ENCODE measurements at regions of chr7 and their contacts with region 1.

Region 1: GRCh38 chr7:35801392-35802101 is 690 bp downstream of the SEPTIN7 start:
- DNase-seq: peak; percentile 79
- H3K4me3 Mint-ChIP-seq: peak overlapping the region; percentile 95
- H3K27ac Mint-ChIP-seq: peak overlapping the region; percentile 90
- H3K4me1 Mint-ChIP-seq: peaks cover 44% of the 10 kb centered on the region
- H3K27me3 Mint-ChIP-seq: no peaks in the 10 kb centered on the region

Region 2: DNA sequence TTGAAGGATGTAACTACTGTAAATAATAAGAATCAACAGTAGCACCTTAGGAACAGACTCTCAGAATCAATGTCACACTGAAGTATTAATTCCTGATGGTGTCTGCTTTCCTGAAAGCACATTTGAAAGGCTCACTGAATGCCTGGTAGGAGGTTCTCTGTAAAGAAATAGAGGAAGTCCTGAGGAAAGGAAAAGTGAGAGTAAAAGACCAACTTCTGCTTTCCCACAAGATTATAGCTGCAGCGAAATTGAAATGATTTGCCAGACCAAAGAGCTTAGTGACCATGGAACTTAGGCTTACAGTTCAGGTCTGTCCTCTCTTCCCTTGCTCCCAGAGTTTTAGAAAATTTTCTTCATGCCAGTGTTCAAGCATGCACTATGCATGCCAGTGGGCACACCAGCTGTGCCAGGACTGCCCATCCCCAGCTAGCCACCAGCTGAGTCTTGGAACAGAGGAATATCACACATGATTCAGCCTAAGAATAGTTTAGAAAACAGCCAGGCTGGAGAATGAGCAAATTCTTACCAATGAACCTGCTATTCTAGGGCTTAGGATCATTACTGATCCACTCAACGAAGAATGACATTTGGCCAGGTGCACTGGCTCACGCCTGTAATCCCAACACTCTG is 229.8 kb before region 1 on chr7:
- CTCF ChIA-PET with region 1: no interaction called
- POLR2A ChIA-PET with region 1: no interaction called
- DNase-seq: no peak
- H3K4me3 Mint-ChIP-seq: no peak overlapping the region
- H3K27ac Mint-ChIP-seq: no peak overlapping the region
- H3K4me1 Mint-ChIP-seq: no peaks in the 10 kb centered on the region
- H3K27me3 Mint-ChIP-seq: peaks cover 8% of the 10 kb centered on the region

Region 3: GRCh38 chr7:35700865-35701264 is 100.7 kb before region 1 on chr7:
- CTCF ChIA-PET with region 1: interaction called, 15 read pairs
- POLR2A ChIA-PET with region 1: interaction called, 295 read pairs
- DNase-seq: no peak
- H3K4me3 Mint-ChIP-seq: no peak overlapping the region
- H3K27ac Mint-ChIP-seq: no peak overlapping the region
- H3K4me1 Mint-ChIP-seq: peaks cover 48% of the 10 kb centered on the region
- H3K27me3 Mint-ChIP-seq: peaks cover 2% of the 10 kb centered on the region

Region 4: DNA sequence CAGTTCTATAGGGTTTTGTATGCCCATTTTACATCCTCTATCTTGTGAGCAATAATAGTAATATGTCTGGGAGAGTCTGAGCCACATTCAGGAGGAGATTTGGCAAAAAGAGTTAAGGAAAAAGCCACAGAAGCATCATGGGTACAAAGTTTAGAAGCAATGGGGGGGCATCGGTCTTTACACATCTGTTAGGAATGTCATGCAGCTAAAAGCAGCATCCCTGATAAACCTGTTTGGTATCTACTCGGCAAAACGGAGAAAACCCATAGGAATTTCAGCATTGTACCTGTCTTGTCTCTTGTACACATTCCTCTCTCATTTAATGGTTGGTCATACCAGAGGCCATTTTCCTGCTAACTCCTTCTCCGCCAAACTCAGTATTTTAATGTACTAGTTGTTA is 94.1 kb before region 1 on chr7:
- CTCF ChIA-PET with region 1: interaction called, 9 read pairs
- POLR2A ChIA-PET with region 1: interaction called, 22 read pairs
- DNase-seq: no peak
- H3K4me3 Mint-ChIP-seq: no peak overlapping the region
- H3K27ac Mint-ChIP-seq: no peak overlapping the region
- H3K4me1 Mint-ChIP-seq: peaks cover 34% of the 10 kb centered on the region
- H3K27me3 Mint-ChIP-seq: peaks cover 3% of the 10 kb centered on the region

Region 5: DNA sequence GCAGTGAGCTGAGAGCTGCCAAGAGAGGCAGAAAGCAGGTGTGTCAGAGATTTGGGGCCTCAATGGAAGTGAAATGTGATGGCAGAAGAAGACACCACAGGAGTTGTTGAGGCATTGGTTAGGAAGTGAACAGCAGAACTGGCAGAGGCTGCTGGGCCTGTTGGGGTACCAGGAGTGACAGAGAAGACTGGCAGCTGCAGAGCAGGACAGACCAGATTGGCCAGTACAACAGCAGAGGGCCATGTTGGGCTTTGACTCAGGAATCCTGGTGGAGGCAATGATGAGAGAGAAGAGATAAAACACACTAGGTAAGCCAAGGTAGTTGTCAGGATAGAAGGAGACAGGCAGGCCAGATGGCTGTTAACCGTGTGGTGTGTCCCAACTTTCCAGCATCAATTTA is 86.7 kb before region 1 on chr7:
- CTCF ChIA-PET with region 1: interaction called, 9 read pairs
- POLR2A ChIA-PET with region 1: interaction called, 22 read pairs
- DNase-seq: no peak
- H3K4me3 Mint-ChIP-seq: no peak overlapping the region
- H3K27ac Mint-ChIP-seq: no peak overlapping the region
- H3K4me1 Mint-ChIP-seq: peaks cover 11% of the 10 kb centered on the region
- H3K27me3 Mint-ChIP-seq: peaks cover 7% of the 10 kb centered on the region

Region 6: GRCh38 chr7:35729061-35729783 is 72.3 kb before region 1 on chr7:
- CTCF ChIA-PET with region 1: interaction called, 7 read pairs
- POLR2A ChIA-PET with region 1: interaction called, 50 read pairs
- DNase-seq: peak; percentile 61
- H3K4me3 Mint-ChIP-seq: peak overlapping the region; percentile 1
- H3K27ac Mint-ChIP-seq: peak overlapping the region; percentile 69
- H3K4me1 Mint-ChIP-seq: peaks cover 61% of the 10 kb centered on the region
- H3K27me3 Mint-ChIP-seq: peaks cover 4% of the 10 kb centered on the region

Region 7: GRCh38 chr7:35818513-35818912 is 17.0 kb after region 1 on chr7:
- CTCF ChIA-PET with region 1: interaction called, 6 read pairs
- POLR2A ChIA-PET with region 1: interaction called, 30 read pairs
- DNase-seq: no peak
- H3K4me3 Mint-ChIP-seq: no peak overlapping the region
- H3K27ac Mint-ChIP-seq: peak overlapping the region; percentile 21
- H3K4me1 Mint-ChIP-seq: peaks cover 64% of the 10 kb centered on the region
- H3K27me3 Mint-ChIP-seq: no peaks in the 10 kb centered on the region

Measured in activated CD4-positive, alpha-beta memory T cell treated with anti-CD3 and anti-CD28 coated beads, Interleukin-2, amount 10 ng/mL, durations not matched to agents 7 days and 5 days (primary cell).